ENCODE measurements at regions of chr1 and their contacts with region 1.

Region 1: GRCh38 chr1:200971955-200972711 is 51.4 kb downstream of the KIF21B start:
- DNase-seq: no peak
- H3K4me3 ChIP-seq: no peak overlapping the region
- CTCF ChIP-seq: peak; percentile 68

Region 2: GRCh38 chr1:200099040-200099439 is 873.1 kb before region 1 on chr1:
- CTCF ChIA-PET with region 1: no interaction called
- POLR2A ChIA-PET with region 1: no interaction called
- DNase-seq: no peak
- H3K4me3 ChIP-seq: no peak overlapping the region
- CTCF ChIP-seq: no peak

Region 3: GRCh38 chr1:200510228-200510623 is 461.9 kb before region 1 on chr1:
- CTCF ChIA-PET with region 1: no interaction called
- POLR2A ChIA-PET with region 1: no interaction called
- DNase-seq: peak; percentile 41
- H3K4me3 ChIP-seq: no peak overlapping the region
- CTCF ChIP-seq: peak; percentile 73

Region 4: DNA sequence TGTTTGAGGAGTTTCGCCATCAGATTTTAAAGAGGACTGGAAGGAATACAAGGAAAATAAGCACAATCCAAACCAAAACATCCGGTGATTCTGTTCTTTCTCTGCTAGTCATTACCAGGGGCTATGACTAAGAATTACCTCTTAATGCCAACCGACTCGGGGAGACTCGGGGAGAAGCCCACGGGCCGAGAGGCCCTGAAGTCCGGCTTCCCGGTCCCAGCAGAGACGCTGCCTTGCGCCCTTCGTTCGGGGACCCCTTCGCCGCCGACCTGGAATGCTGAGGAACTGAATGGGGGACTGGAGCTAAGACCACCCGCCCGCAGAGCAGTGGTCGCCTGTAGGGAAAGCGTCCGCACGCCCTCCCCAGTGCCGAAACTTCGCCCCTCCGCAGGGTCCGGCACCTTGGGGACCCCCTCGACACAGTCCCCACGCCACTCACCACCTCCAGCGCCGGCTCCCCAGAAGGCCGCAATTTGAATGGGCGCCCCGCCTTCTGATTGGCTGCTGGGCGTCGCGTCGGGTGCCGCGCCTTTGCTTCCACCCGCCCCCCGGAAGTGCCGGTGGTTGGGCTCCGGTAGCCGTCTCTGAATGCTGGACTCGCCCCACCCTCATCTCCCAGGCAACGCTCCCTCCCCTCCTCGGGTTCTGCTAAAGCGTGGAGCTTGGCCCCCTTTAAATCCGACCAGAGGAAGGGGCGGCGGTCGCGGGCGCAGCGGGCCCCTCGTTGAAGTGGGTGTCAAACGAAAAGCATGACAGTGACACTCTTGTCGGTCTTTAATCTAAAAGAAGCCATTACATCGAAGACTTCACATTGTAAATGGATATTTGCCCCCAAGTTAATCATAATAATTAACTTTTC is 351.6 kb before region 1 on chr1 and contains the start of gene KIF14:
- CTCF ChIA-PET with region 1: interaction called, 18 read pairs
- POLR2A ChIA-PET with region 1: no interaction called
- DNase-seq: no peak
- H3K4me3 ChIP-seq: peak within 1 kb of the TSS; percentile 88
- CTCF ChIP-seq: no peak

Region 5: GRCh38 chr1:200959411-200959921 is 12.7 kb before region 1 on chr1:
- CTCF ChIA-PET with region 1: interaction called, 77 read pairs
- POLR2A ChIA-PET with region 1: no interaction called
- DNase-seq: no peak
- H3K4me3 ChIP-seq: no peak overlapping the region
- CTCF ChIP-seq: no peak

Region 6: GRCh38 chr1:201042779-201043461 is 70.8 kb after region 1 on chr1:
- CTCF ChIA-PET with region 1: interaction called, 262 read pairs
- POLR2A ChIA-PET with region 1: interaction called, 4 read pairs
- DNase-seq: peak; percentile 23
- H3K4me3 ChIP-seq: no peak overlapping the region
- CTCF ChIP-seq: peak; percentile 84

Region 7: DNA sequence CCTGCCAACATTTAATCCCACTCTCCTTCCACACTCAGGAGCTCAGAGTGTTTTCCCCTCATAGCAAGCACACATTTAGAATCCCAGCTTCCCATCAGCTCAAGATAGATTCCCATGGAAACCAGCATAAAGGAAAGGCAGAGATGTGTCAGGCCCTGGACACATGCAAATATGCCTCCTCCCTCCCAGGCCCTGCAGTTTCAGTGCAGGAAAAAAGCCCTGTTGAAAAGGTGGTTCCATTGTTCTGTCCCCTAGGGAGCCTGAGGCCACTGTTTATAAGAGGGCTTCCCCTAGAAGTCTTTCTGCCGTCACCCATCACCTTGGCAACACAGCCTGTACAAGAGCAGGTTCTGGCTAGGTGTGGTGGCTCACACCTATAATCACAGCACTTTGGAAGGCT is 136.5 kb after region 1 on chr1:
- CTCF ChIA-PET with region 1: interaction called, 78 read pairs
- POLR2A ChIA-PET with region 1: no interaction called
- DNase-seq: no peak
- H3K4me3 ChIP-seq: no peak overlapping the region
- CTCF ChIP-seq: no peak

Region 8: GRCh38 chr1:201219481-201220359 is 247.6 kb after region 1 on chr1:
- CTCF ChIA-PET with region 1: interaction called, 10 read pairs
- POLR2A ChIA-PET with region 1: no interaction called
- DNase-seq: no peak
- H3K4me3 ChIP-seq: no peak overlapping the region
- CTCF ChIP-seq: no peak

Measured in AG04449 (cell line).